ENCODE measurements at regions of chr4 and their contacts with region 1.

Region 1: GRCh38 chr4:173317004-173317403 is 17.2 kb downstream of the HMGB2 start:
- DNase-seq: no peak
- ATAC-seq: peak; percentile 77
- H3K4me3 ChIP-seq: no peak overlapping the region
- H3K27ac ChIP-seq: no peak overlapping the region
- H3K4me1 ChIP-seq: peaks cover 6% of the 10 kb centered on the region; the same call in 1 of the 2 replicates
- H3K27me3 ChIP-seq: no peaks in the 10 kb centered on the region
- CTCF ChIP-seq: peak; percentile 47

Region 2: DNA sequence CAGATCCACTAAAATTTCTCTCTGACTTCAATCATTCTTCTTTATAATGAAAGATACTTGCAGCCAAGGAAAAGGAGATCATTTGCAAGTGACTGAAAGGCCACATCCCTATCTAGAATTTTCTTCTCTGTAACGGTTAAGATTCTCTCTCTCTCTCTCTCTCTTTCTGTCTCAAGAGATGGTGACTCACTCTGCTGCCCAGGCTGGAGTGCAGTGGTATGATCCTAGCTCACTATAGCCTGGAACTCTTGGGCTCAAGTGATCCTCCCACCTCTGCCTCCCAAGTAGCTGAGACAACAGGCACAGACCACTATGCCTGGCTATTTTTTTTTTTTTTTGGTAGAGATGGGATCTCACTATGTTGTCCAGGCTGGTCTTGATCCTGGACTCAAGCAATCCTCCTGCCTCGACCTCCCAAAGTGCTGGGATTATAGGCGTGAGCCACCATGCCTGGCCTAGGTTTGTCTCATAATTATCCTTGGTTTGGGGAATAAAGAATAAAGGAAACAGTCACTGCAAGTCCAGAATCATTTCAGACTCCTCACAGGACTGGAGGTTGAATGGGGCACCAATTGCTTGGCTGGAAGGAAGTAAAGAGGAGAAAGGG is 181.7 kb before region 1 on chr4:
- CTCF ChIA-PET with region 1: no interaction called
- POLR2A ChIA-PET with region 1: no interaction called
- in situ Hi-C with region 1: no loop called
- intact Hi-C with region 1: no loop called
- DNase-seq: no peak
- ATAC-seq: no peak
- H3K4me3 ChIP-seq: no peak overlapping the region
- H3K27ac ChIP-seq: no peak overlapping the region
- H3K4me1 ChIP-seq: no peaks in the 10 kb centered on the region; the same call in 1 of the 2 replicates
- H3K27me3 ChIP-seq: no peaks in the 10 kb centered on the region
- CTCF ChIP-seq: no peak

Region 3: GRCh38 chr4:173448603-173449379 is 131.8 kb after region 1 on chr4:
- CTCF ChIA-PET with region 1: no interaction called
- POLR2A ChIA-PET with region 1: interaction called, 11 read pairs
- in situ Hi-C with region 1: no loop called
- intact Hi-C with region 1: no loop called
- DNase-seq: no peak
- ATAC-seq: no peak
- H3K4me3 ChIP-seq: no peak overlapping the region
- H3K27ac ChIP-seq: no peak overlapping the region
- H3K4me1 ChIP-seq: no peaks in the 10 kb centered on the region
- H3K27me3 ChIP-seq: no peaks in the 10 kb centered on the region
- CTCF ChIP-seq: no peak